ENCODE measurements at regions of chr1 and their contacts with region 1.

Region 1: GRCh38 chr1:98732985-98733781 is 71.7 kb downstream of the SNX7 start:
- DNase-seq: peak; percentile 24
- ATAC-seq: peak; percentile 62
- H3K4me3 ChIP-seq: no peak overlapping the region
- H3K27ac ChIP-seq: no peak overlapping the region
- H3K4me1 ChIP-seq: no peaks in the 10 kb centered on the region
- H3K27me3 ChIP-seq: no peaks in the 10 kb centered on the region; a peak in 2 of 4 replicates
- CTCF ChIP-seq: no peak
- EP300 ChIP-seq: no peak
- POLR2A ChIP-seq: no peak
- RAD21 ChIP-seq: no peak

Region 2: GRCh38 chr1:98677288-98677687 is 55.9 kb before region 1 on chr1:
- CTCF ChIA-PET with region 1: no interaction called
- POLR2A ChIA-PET with region 1: no interaction called
- RAD21 ChIA-PET with region 1: no interaction called
- SMC1A ChIA-PET with region 1: no interaction called
- in situ Hi-C with region 1: no loop called
- intact Hi-C with region 1: loop called (anchors 5 kb)
- DNase-seq: no peak
- ATAC-seq: no peak
- H3K4me3 ChIP-seq: no peak overlapping the region
- H3K27ac ChIP-seq: no peak overlapping the region
- H3K4me1 ChIP-seq: no peaks in the 10 kb centered on the region
- H3K27me3 ChIP-seq: no peaks in the 10 kb centered on the region
- CTCF ChIP-seq: no peak
- EP300 ChIP-seq: no peak
- POLR2A ChIP-seq: no peak
- RAD21 ChIP-seq: no peak

Region 3: DNA sequence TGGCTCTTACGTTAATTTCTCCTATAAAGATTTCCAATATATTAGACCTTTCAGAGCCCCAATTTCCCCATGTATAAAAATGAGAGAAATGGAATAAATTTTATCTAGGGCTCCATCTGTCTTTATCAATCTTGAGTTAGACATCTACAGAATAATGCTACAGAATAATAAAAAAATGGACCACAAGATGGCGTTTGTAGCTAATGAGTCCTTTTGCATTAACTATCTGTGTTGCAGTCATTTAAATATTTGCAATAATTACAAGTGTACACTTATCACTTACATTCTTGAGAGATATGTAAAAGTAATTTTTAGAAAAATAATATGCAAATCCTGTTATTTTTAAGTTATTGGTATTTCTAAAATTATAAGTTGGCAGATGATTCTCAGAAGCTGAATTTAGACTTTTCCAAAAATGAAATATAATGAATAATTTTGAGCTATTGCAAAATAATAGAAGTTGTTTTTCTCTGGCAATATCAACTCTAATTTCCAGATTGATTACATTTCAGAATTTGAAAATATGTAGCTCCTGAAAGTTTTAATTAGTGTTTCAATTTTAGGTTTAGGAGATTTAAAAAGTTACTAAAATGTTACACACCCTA is 16.1 kb after region 1 on chr1:
- CTCF ChIA-PET with region 1: interaction called, 22 read pairs
- POLR2A ChIA-PET with region 1: no interaction called
- RAD21 ChIA-PET with region 1: interaction called, 3 read pairs
- SMC1A ChIA-PET with region 1: interaction called, 7 read pairs
- in situ Hi-C with region 1: no loop called
- intact Hi-C with region 1: no loop called
- DNase-seq: no peak
- ATAC-seq: peak; percentile 59
- H3K4me3 ChIP-seq: no peak overlapping the region
- H3K27ac ChIP-seq: no peak overlapping the region
- H3K4me1 ChIP-seq: no peaks in the 10 kb centered on the region
- H3K27me3 ChIP-seq: no peaks in the 10 kb centered on the region
- CTCF ChIP-seq: peak; percentile 18 to 42 (median 22); a peak in 2 of 6 replicates
- EP300 ChIP-seq: no peak
- POLR2A ChIP-seq: no peak
- RAD21 ChIP-seq: peak; percentile 31; the same call in 1 of the 2 replicates

Region 4: GRCh38 chr1:98839840-98840239 is 106.7 kb after region 1 on chr1:
- CTCF ChIA-PET with region 1: no interaction called
- POLR2A ChIA-PET with region 1: no interaction called
- RAD21 ChIA-PET with region 1: no interaction called
- SMC1A ChIA-PET with region 1: no interaction called
- in situ Hi-C with region 1: no loop called
- intact Hi-C with region 1: no loop called
- DNase-seq: no peak
- ATAC-seq: no peak
- H3K4me3 ChIP-seq: no peak overlapping the region
- H3K27ac ChIP-seq: no peak overlapping the region
- H3K4me1 ChIP-seq: no peaks in the 10 kb centered on the region
- H3K27me3 ChIP-seq: no peaks in the 10 kb centered on the region
- CTCF ChIP-seq: no peak
- EP300 ChIP-seq: no peak
- POLR2A ChIP-seq: no peak
- RAD21 ChIP-seq: no peak

Region 5: GRCh38 chr1:98940722-98941079 is 207.5 kb after region 1 on chr1:
- CTCF ChIA-PET with region 1: no interaction called
- POLR2A ChIA-PET with region 1: no interaction called
- RAD21 ChIA-PET with region 1: no interaction called
- SMC1A ChIA-PET with region 1: no interaction called
- in situ Hi-C with region 1: no loop called
- intact Hi-C with region 1: no loop called
- DNase-seq: no peak
- ATAC-seq: no peak
- H3K4me3 ChIP-seq: no peak overlapping the region
- H3K27ac ChIP-seq: no peak overlapping the region
- H3K4me1 ChIP-seq: no peaks in the 10 kb centered on the region
- H3K27me3 ChIP-seq: no peaks in the 10 kb centered on the region
- CTCF ChIP-seq: no peak
- EP300 ChIP-seq: no peak
- POLR2A ChIP-seq: no peak
- RAD21 ChIP-seq: no peak

Measured in GM12878 (cell line).